Activated B cell treated with CpG ODN at 0.5 μM for 24 hours (primary cell): ENCODE measurements at regions of chr13 and their contacts with region 1.

Region 1: DNA sequence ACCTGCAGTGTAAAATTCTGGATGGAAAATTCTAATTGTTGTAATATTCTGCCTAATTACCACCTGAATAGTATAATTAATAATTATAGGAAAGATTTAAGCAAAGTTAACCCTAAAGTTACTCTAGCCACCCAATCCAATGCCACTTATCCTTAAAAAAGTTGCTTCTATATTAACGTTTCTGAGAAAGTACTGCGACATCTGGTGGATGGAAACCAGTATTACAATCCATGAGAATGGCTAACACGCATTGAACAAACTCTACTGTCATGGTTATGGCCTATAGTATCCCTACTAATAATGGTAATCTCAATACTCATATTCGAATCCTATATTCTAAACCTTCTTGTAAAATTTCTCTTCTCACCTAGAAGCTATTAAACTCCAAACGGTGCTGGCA is 1551.8 kb downstream of the SLITRK1 start:
- DNase-seq: no peak
- ATAC-seq: no peak
- H3K4me3 Mint-ChIP-seq: no peak overlapping the region
- H3K27ac Mint-ChIP-seq: no peak overlapping the region
- H3K4me1 Mint-ChIP-seq: no peaks in the 10 kb centered on the region
- H3K27me3 Mint-ChIP-seq: no peaks in the 10 kb centered on the region
- CTCF ChIP-seq: no peak

Region 2: DNA sequence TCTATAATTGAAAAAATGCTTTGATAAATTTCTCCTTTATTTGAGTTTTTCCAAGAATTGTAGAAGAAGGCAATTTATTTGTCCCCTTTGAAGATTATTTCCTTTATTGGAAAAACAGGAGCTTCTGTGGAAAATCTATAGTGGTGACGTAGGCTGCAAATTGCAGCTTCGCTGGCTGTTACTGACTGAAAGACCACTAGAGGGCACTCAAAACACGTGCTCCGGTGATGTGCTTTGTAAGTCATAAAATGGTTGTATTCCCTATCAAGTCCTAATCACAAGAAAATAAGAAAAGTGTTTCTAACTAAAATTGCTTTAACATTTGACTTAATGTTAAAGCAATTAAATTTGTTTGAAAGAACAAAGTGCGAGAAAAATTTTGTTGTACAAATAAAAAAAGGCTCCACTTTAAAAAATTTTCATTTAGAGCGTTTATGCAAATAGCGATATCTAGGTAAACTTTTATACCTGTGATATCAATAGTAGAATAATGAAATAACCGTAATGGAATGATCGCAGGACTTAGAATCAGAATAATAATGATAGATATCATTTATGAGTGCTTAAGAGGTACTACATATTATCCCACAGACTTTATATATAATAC is 1351.4 kb before region 1 on chr13:
- CTCF ChIA-PET with region 1: no interaction called
- POLR2A ChIA-PET with region 1: no interaction called
- intact Hi-C with region 1: loop called (anchors 5 kb)
- DNase-seq: no peak
- ATAC-seq: no peak
- H3K4me3 Mint-ChIP-seq: no peak overlapping the region
- H3K27ac Mint-ChIP-seq: no peak overlapping the region
- H3K4me1 Mint-ChIP-seq: no peaks in the 10 kb centered on the region
- H3K27me3 Mint-ChIP-seq: no peaks in the 10 kb centered on the region
- CTCF ChIP-seq: no peak